Breast epithelium (tissue), 4 donors: ENCODE measurements at regions of chr2 and their contacts with region 1.

Region 1: DNA sequence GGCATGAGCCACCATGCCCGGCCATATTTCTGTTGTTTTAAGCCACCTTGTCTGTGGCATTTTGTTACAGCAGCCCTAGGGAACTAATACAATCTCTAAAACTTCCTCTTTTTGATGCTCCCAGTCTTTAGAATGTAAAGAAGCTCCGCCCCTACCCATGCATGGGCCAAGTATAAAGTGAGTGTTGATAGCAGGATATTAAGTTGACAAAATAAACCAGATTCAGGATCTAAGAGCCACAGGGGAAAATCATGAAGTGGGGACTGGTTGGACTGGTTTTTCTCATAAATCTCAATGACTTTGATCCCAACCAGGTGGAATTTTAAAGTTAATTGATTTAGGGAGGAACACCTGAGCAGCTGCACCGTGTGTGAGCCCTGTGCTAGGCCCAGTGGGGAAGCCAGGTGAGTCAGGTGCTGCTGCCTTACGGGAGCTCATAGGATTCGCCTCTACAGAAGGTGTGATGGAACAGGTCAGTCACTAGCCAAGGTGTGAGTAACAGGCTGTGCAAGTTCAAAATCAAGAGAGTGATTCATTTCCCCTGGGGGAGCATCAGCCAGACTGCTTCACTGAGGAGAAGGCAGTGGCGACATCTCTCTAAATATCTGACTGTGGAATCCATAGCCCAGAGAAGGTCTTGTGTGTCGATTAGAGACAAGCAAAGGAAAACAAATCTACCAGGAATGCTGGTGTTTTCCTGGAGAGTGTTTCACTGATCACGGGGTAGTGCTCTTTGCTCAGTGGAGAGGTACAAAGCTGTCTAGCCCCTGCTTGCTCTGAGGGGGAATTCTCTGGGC is 63.0 kb upstream of the MSH2 start:
- DNase-seq: peak in 1 of 2 donors; percentile 76
- H3K4me3 ChIP-seq: no peak overlapping the region
- H3K27ac ChIP-seq: peak overlapping the region; percentile 83 to 88
- H3K4me1 ChIP-seq: peaks cover 0 to 5% of the 10 kb centered on the region in 2 donors
- H3K27me3 ChIP-seq: no peaks in the 10 kb centered on the region
- CTCF ChIP-seq: no peak
- POLR2A ChIP-seq: no peak

Region 2: GRCh38 chr2:47300609-47301276 is 39.2 kb before region 1 on chr2:
- intact Hi-C with region 1: no loop called
- DNase-seq: no peak
- H3K4me3 ChIP-seq: no peak overlapping the region
- H3K27ac ChIP-seq: peak overlapping the region in 1 of 2 donors; percentile 8
- H3K4me1 ChIP-seq: peaks cover 0 to 12% of the 10 kb centered on the region in 2 donors
- H3K27me3 ChIP-seq: no peaks in the 10 kb centered on the region
- CTCF ChIP-seq: no peak
- POLR2A ChIP-seq: no peak

Region 3: DNA sequence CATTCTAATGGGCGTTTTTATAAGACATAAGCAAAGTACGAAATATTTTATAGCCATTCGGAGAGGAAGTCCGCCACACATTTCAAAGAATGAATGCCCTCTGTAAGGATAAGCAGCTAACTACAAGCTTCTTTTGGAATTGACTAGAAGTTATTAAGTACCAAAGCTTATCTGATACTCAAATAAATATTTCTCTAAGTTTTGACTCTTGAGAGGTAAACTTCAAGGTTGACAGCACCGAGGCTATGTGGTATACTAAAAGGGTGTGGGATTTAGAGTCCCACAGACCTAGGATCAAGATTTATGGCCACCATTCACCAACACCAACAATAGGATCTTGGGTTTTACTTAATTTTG is 14.9 kb after region 1 on chr2:
- intact Hi-C with region 1: loop called (anchors 1 kb)
- DNase-seq: no peak
- H3K4me3 ChIP-seq: no peak overlapping the region
- H3K27ac ChIP-seq: no peak overlapping the region
- H3K4me1 ChIP-seq: no peaks in the 10 kb centered on the region
- H3K27me3 ChIP-seq: no peaks in the 10 kb centered on the region
- CTCF ChIP-seq: no peak
- POLR2A ChIP-seq: no peak

Region 4: DNA sequence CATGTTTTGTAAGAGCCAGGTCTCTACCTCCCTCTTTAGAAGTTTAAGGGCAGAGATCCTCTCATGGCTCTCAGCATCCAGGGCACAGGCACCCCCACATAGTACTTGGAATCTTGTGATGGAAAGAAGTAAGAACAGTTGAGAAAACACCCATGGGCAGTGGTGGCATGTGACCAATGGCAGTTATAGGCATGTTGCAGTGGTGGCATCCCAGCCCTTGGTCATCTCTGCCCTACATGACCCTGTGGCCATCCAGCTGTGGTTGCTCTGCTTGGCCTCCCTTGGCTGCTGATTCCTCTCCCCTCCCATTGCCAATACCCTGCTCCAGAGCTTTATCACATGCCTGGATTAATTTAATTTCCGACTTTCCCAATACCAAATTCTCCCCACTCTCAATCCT is 49.7 kb after region 1 on chr2:
- intact Hi-C with region 1: loop called (anchors 5 kb)
- DNase-seq: no peak
- H3K4me3 ChIP-seq: no peak overlapping the region
- H3K27ac ChIP-seq: no peak overlapping the region
- H3K4me1 ChIP-seq: no peaks in the 10 kb centered on the region
- H3K27me3 ChIP-seq: no peaks in the 10 kb centered on the region
- CTCF ChIP-seq: no peak
- POLR2A ChIP-seq: no peak

Region 5: GRCh38 chr2:47751875-47752357 is 412.0 kb after region 1 on chr2:
- intact Hi-C with region 1: no loop called
- DNase-seq: no peak
- H3K4me3 ChIP-seq: peak overlapping the region in 1 of 3 donors; percentile 22
- H3K27ac ChIP-seq: peak overlapping the region; percentile 92 to 95
- H3K4me1 ChIP-seq: no peaks in the 10 kb centered on the region
- H3K27me3 ChIP-seq: no peaks in the 10 kb centered on the region
- CTCF ChIP-seq: no peak
- POLR2A ChIP-seq: no peak

Region 6: DNA sequence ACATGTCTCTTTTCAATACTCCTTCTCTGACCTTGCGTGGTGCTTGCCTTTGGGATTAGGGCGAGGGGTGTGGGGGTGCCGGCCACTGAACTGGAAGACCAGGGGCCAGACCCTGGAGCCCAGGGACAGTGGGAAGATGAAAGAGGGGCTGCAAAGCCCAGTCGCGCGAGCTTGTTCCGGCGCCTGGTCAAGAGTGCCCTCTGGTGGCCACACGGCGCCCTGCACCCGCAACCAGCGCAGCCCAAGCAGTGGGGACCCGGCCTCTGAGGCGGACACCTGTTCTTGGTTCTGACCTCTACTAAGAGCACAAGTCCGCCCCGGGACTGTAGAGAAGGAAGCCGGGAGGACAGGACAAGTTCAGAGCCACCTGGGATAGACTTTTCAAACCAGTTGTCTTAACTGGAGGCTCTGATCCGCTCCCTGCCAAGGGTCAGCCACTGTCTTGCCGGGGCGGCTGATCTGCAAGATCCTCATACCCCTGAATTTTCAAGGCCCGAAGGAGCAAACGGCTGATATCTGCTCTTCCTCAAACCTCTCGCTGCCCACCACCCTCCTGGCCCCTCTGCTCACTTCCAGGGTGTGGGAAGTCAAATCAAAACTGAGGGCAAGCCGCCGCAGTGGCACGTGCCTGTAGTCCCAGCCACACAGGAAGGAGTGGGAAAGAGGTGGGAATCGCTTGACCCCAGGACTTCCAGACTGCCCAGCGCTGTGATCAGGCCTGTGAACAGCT is 428.1 kb after region 1 on chr2:
- intact Hi-C with region 1: loop called (anchors 5 kb)
- DNase-seq: peak; percentile 41 to 61
- H3K4me3 ChIP-seq: peak overlapping the region in 1 of 3 donors; percentile 37
- H3K27ac ChIP-seq: no peak overlapping the region
- H3K4me1 ChIP-seq: no peaks in the 10 kb centered on the region
- H3K27me3 ChIP-seq: no peaks in the 10 kb centered on the region
- CTCF ChIP-seq: peak; percentile 89 to 94 (median 92)
- POLR2A ChIP-seq: no peak